Mammary epithelial cell (primary cell): ENCODE measurements at regions of chr13 and their contacts with region 1.

Region 1: DNA sequence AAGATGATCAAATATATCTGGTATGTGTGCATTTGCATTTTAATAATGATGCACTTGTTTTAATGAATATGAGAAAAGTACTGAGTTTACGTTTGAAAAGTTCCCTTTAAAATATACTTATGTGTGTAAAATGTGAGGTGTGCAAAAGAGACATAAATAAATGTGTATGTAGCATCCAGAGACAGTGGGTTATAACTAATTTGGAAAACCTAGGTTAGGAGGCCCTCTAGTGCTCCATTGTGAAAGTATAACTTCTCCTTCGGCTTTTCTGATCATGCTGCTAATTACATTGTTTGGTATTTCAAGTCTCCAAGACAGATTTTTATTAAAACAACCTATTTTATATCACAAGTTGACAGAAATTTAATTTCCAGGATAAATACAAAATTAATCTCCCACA is 30.1 kb downstream of the SCEL start:
- DNase-seq: peak; percentile 16
- H3K4me3 ChIP-seq: no peak overlapping the region
- H3K27ac ChIP-seq: no peak overlapping the region
- H3K4me1 ChIP-seq: no peaks in the 10 kb centered on the region
- H3K27me3 ChIP-seq: no peaks in the 10 kb centered on the region
- CTCF ChIP-seq: peak; percentile 60 to 62

Region 2: GRCh38 chr13:77026818-77027585 is 538.6 kb before region 1 on chr13 and contains the start of gene FBXL3:
- CTCF ChIA-PET with region 1: no interaction called
- dilution Hi-C with region 1: no loop called
- in situ Hi-C with region 1: no loop called
- intact Hi-C with region 1: loop called (anchors 10 kb)
- DNase-seq: peak; percentile 91
- H3K4me3 ChIP-seq: peak within 1 kb of the TSS; percentile 83 to 95 (median 89)
- H3K27ac ChIP-seq: peak within 1 kb of the TSS; percentile 85
- H3K4me1 ChIP-seq: peaks cover 22% of the 10 kb centered on the region
- H3K27me3 ChIP-seq: no peaks in the 10 kb centered on the region
- CTCF ChIP-seq: no peak
- total RNA-seq, gene FBXL3: 31.9 to 44.8 TPM

Region 3: GRCh38 chr13:77250975-77251374 is 314.7 kb before region 1 on chr13:
- CTCF ChIA-PET with region 1: no interaction called
- dilution Hi-C with region 1: no loop called
- in situ Hi-C with region 1: no loop called
- intact Hi-C with region 1: no loop called
- DNase-seq: no peak
- H3K4me3 ChIP-seq: no peak overlapping the region
- H3K27ac ChIP-seq: no peak overlapping the region
- H3K4me1 ChIP-seq: no peaks in the 10 kb centered on the region
- H3K27me3 ChIP-seq: no peaks in the 10 kb centered on the region
- CTCF ChIP-seq: no peak

Region 4: GRCh38 chr13:77338961-77339401 is 226.7 kb before region 1 on chr13:
- CTCF ChIA-PET with region 1: no interaction called
- dilution Hi-C with region 1: no loop called
- in situ Hi-C with region 1: no loop called
- intact Hi-C with region 1: loop called (anchors 10 kb)
- DNase-seq: no peak
- H3K4me3 ChIP-seq: no peak overlapping the region
- H3K27ac ChIP-seq: no peak overlapping the region
- H3K4me1 ChIP-seq: no peaks in the 10 kb centered on the region
- H3K27me3 ChIP-seq: peaks cover 3% of the 10 kb centered on the region
- CTCF ChIP-seq: no peak

Region 5: GRCh38 chr13:77492982-77493381 is 72.7 kb before region 1 on chr13:
- CTCF ChIA-PET with region 1: no interaction called
- dilution Hi-C with region 1: no loop called
- in situ Hi-C with region 1: loop called (anchors 5 kb)
- intact Hi-C with region 1: loop called (anchors 1 kb)
- DNase-seq: peak; percentile 16
- H3K4me3 ChIP-seq: no peak overlapping the region
- H3K27ac ChIP-seq: no peak overlapping the region
- H3K4me1 ChIP-seq: no peaks in the 10 kb centered on the region
- H3K27me3 ChIP-seq: peaks cover 21% of the 10 kb centered on the region
- CTCF ChIP-seq: peak; percentile 78 to 79

Region 6: GRCh38 chr13:77528834-77529505 is 36.7 kb before region 1 on chr13:
- CTCF ChIA-PET with region 1: no interaction called
- dilution Hi-C with region 1: loop called (anchors 5 kb)
- in situ Hi-C with region 1: no loop called
- intact Hi-C with region 1: no loop called
- DNase-seq: no peak
- H3K4me3 ChIP-seq: no peak overlapping the region
- H3K27ac ChIP-seq: no peak overlapping the region
- H3K4me1 ChIP-seq: peaks cover 12% of the 10 kb centered on the region
- H3K27me3 ChIP-seq: no peaks in the 10 kb centered on the region
- CTCF ChIP-seq: no peak

Region 7: DNA sequence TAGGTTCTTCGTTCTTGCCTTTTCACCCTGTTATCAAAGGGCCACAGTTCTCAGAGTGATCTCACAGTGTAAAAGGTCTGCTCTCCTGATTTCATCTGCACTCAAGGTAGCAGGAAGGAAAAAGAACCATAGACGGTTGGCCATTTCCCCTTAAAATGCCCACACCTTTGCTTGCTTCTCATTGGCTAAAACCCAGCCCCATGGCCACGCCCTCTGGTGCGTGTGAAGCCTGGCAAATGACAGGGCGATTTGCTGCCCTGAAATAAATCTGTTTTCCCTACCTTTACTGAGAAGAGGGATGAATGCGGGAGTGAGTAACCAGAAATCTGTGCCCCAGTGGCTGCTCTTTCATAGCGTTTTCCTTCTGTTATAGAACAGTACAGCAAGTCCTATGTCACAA is 768.4 kb after region 1 on chr13:
- CTCF ChIA-PET with region 1: no interaction called
- dilution Hi-C with region 1: no loop called
- in situ Hi-C with region 1: no loop called
- intact Hi-C with region 1: no loop called
- DNase-seq: no peak
- H3K4me3 ChIP-seq: no peak overlapping the region
- H3K27ac ChIP-seq: no peak overlapping the region
- H3K4me1 ChIP-seq: no peaks in the 10 kb centered on the region
- H3K27me3 ChIP-seq: peaks cover under 1% of the 10 kb centered on the region
- CTCF ChIP-seq: no peak

Region 8: DNA sequence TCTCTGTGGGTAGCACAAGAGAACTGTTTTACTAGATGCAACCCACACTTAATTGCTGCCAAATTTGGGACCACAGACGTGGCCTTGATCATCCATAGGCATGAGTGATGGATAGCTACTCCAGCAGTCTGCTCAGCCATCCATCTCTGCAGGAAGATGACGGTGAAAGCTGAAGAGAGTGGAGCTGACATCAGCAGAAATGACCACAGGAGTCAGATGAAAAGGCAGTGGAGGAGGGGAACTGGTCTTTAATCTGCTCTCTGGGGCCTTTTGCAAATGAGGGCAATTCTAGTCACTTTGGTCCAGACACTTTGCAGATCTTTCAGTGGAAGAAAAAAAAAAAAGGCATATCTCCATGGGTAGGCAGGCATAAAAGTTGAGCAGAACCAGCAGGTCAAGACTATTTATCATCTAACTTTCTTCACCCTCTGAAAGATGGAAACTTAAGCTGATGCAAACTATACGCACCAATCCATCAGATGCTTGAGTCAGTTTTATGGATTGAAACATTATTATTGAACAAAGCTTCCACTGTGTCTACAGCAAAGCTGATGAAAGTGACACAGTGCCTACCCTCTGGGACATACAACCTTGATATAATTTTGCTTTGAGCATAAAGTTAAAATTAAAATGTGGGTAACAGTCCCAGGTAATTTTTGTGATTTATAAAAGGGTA is 1375.0 kb after region 1 on chr13:
- CTCF ChIA-PET with region 1: no interaction called
- dilution Hi-C with region 1: no loop called
- in situ Hi-C with region 1: no loop called
- intact Hi-C with region 1: no loop called
- DNase-seq: no peak
- H3K4me3 ChIP-seq: no peak overlapping the region
- H3K27ac ChIP-seq: no peak overlapping the region
- H3K4me1 ChIP-seq: no peaks in the 10 kb centered on the region
- H3K27me3 ChIP-seq: peaks cover under 1% of the 10 kb centered on the region
- CTCF ChIP-seq: no peak